ENCODE measurements at regions of chr18 and their contacts with region 1.

Region 1: GRCh38 chr18:74407888-74408287 is 49.2 kb downstream of the DIPK1C start:
- DNase-seq: no peak
- H3K4me3 Mint-ChIP-seq: peak overlapping the region; percentile 66
- H3K27ac Mint-ChIP-seq: peak overlapping the region; percentile 84
- H3K4me1 Mint-ChIP-seq: peaks cover 30% of the 10 kb centered on the region
- H3K27me3 Mint-ChIP-seq: no peaks in the 10 kb centered on the region

Region 2: GRCh38 chr18:74370115-74370514 is 37.8 kb before region 1 on chr18:
- CTCF ChIA-PET with region 1: no interaction called
- intact Hi-C with region 1: loop called (anchors 5 kb)
- DNase-seq: no peak
- H3K4me3 Mint-ChIP-seq: no peak overlapping the region
- H3K27ac Mint-ChIP-seq: no peak overlapping the region
- H3K4me1 Mint-ChIP-seq: peaks cover 46% of the 10 kb centered on the region
- H3K27me3 Mint-ChIP-seq: no peaks in the 10 kb centered on the region

Region 3: GRCh38 chr18:74387383-74387782 is 20.5 kb before region 1 on chr18:
- CTCF ChIA-PET with region 1: interaction called, 3 read pairs
- intact Hi-C with region 1: loop called (anchors 2 kb)
- DNase-seq: no peak
- H3K4me3 Mint-ChIP-seq: no peak overlapping the region
- H3K27ac Mint-ChIP-seq: no peak overlapping the region
- H3K4me1 Mint-ChIP-seq: peaks cover 30% of the 10 kb centered on the region
- H3K27me3 Mint-ChIP-seq: no peaks in the 10 kb centered on the region

Region 4: GRCh38 chr18:74775239-74775638 is 367.4 kb after region 1 on chr18:
- CTCF ChIA-PET with region 1: no interaction called
- intact Hi-C with region 1: no loop called
- DNase-seq: no peak
- H3K4me3 Mint-ChIP-seq: no peak overlapping the region
- H3K27ac Mint-ChIP-seq: no peak overlapping the region
- H3K4me1 Mint-ChIP-seq: peaks cover 2% of the 10 kb centered on the region
- H3K27me3 Mint-ChIP-seq: no peaks in the 10 kb centered on the region